GM12878 (cell line): ENCODE measurements at regions of chr10 and their contacts with region 1.

Region 1: DNA sequence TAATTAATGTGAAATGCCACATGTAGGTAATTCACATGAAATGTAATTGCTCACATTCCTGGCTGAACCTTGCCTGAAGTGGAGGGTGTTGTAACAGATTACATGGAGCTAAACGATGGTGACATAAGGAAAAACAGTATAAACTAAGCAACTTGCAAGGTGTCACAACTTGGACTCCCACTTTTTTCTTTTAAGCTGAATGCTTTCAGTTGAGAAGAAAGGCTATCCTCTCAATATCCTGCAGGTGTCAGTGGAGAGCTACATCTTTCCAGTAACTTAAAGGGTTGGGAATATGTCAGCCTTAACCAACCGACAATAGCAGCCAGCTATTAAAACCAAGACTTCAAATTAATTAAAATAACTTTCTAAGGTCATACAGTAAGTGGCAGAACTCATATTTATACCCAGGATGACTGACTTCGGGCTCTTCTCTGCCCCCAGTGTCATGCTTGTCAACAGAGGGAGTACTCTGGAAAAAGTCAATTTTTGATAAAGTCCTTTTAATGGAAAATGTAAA is 33.7 kb downstream of the NRBF2 start:
- DNase-seq: peak; percentile 33
- ATAC-seq: peak; percentile 78
- H3K4me3 ChIP-seq: no peak overlapping the region
- H3K27ac ChIP-seq: no peak overlapping the region
- H3K4me1 ChIP-seq: no peaks in the 10 kb centered on the region
- H3K27me3 ChIP-seq: no peaks in the 10 kb centered on the region
- CTCF ChIP-seq: peak; percentile 63 to 72 (median 66)
- EP300 ChIP-seq: no peak
- POLR2A ChIP-seq: no peak
- RAD21 ChIP-seq: peak; percentile 80

Region 2: DNA sequence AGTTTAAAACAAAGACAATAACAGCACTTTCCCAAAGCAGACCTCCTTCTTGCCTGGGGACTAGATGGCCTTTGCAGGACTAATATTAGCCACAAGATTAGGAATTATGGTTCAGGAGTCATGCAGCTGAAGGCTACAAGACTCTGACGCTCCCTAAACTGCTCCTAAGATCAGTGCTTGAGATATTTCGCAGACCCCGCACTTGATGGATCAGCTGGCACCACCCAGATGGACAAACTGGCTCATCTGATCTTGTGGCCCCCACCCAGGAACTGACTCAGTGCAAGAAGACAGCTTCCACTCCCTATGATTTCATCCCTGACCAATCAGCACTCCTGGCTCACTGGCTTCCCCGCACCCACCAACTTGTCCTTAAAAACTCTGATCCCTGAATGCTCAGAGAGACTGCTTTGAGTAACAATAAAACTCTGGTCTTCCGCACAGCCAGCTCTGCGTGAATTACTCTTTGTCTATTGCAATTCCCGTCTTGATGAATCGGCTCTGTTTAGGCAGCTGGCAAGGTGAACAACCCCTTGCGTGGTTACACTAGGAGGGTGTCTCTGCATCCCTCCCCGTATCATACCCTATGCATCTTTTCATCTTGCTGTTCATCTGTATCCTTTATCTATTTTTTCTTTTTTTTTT is 60.6 kb before region 1 on chr10:
- CTCF ChIA-PET with region 1: no interaction called
- POLR2A ChIA-PET with region 1: no interaction called
- RAD21 ChIA-PET with region 1: no interaction called
- SMC1A ChIA-PET with region 1: interaction called, 10 read pairs
- in situ Hi-C with region 1: no loop called
- intact Hi-C with region 1: no loop called
- DNase-seq: no peak
- ATAC-seq: no peak
- H3K4me3 ChIP-seq: no peak overlapping the region
- H3K27ac ChIP-seq: no peak overlapping the region
- H3K4me1 ChIP-seq: no peaks in the 10 kb centered on the region
- H3K27me3 ChIP-seq: no peaks in the 10 kb centered on the region
- CTCF ChIP-seq: no peak
- EP300 ChIP-seq: no peak
- POLR2A ChIP-seq: no peak
- RAD21 ChIP-seq: no peak

Region 3: DNA sequence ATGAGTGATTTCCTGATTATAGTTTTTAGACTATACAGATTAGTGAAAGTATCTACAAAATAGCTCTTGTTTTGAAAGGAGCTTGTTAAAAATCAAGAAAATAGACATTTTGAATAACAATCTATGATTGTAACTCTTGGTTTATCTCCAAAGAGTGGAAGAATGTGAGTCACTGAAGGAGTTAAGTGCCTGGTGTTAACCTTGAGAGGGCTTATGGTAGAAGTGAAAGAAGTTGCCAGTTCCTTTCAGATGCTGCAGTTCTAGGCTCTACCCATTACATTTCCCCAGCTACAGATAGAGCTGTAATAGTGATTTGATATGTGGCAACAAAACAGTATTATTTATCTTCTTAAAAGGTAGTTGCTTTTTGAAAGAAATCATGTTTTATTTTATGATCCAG is 21.0 kb before region 1 on chr10:
- CTCF ChIA-PET with region 1: interaction called, 13 read pairs
- POLR2A ChIA-PET with region 1: interaction called, 3 read pairs
- RAD21 ChIA-PET with region 1: interaction called, 4 read pairs
- SMC1A ChIA-PET with region 1: interaction called, 9 read pairs
- in situ Hi-C with region 1: no loop called
- intact Hi-C with region 1: no loop called
- DNase-seq: no peak
- ATAC-seq: peak; percentile 80
- H3K4me3 ChIP-seq: no peak overlapping the region
- H3K27ac ChIP-seq: no peak overlapping the region
- H3K4me1 ChIP-seq: no peaks in the 10 kb centered on the region; the same call in 1 of the 2 replicates
- H3K27me3 ChIP-seq: no peaks in the 10 kb centered on the region
- CTCF ChIP-seq: no peak
- EP300 ChIP-seq: no peak
- POLR2A ChIP-seq: no peak
- RAD21 ChIP-seq: no peak

Region 4: DNA sequence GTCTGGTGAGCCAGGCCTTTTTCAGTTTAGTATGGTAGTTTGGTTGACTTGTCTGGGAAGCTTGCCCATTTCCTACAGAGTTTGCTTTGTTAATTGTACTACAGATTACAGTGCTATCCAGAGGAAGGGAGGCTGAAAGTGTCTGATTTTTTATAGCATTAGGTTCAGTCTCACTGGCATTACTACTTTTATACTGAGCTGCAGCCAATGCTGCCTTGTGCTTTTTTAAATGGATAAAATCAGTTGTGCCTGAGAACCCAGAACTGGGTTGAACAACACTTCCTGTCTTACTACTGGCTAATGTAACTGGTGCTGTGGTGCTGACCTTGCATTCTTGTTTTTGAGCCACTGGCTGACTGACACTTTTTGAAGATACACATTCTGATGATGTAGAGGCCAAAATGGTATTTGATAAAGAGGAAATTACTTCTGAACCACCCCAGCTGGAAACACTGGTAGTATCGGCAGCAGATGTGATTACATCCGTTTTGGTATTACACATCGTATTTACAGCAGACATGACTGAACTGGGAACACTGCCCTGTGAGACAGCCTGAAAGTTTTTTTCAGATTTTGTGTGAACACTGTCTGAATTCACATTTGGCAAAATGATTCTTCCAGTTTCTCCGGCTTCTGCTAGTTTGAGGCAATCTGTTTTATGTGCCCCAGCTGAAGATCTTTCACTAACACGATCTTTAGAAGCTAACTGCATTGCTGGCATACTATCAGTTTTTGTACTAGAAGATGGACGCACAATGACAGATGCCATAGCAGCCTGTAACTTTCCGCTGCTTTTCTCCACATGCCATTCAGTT is 40.4 kb after region 1 on chr10:
- CTCF ChIA-PET with region 1: interaction called, 23 read pairs
- POLR2A ChIA-PET with region 1: no interaction called
- RAD21 ChIA-PET with region 1: interaction called, 24 read pairs
- SMC1A ChIA-PET with region 1: interaction called, 23 read pairs
- in situ Hi-C with region 1: no loop called
- intact Hi-C with region 1: no loop called
- DNase-seq: peak; percentile 36
- ATAC-seq: peak; percentile 51
- H3K4me3 ChIP-seq: no peak overlapping the region; the same call in 1 of the 2 replicates
- H3K27ac ChIP-seq: peak overlapping the region; percentile 75
- H3K4me1 ChIP-seq: peaks cover 32% of the 10 kb centered on the region
- H3K27me3 ChIP-seq: no peaks in the 10 kb centered on the region
- CTCF ChIP-seq: no peak
- EP300 ChIP-seq: no peak
- POLR2A ChIP-seq: no peak; the same call in 1 of the 2 replicates
- RAD21 ChIP-seq: no peak

Region 5: GRCh38 chr10:63261496-63261895 is 94.7 kb after region 1 on chr10:
- CTCF ChIA-PET with region 1: interaction called, 14 read pairs
- POLR2A ChIA-PET with region 1: interaction called, 6 read pairs
- RAD21 ChIA-PET with region 1: interaction called, 8 read pairs
- SMC1A ChIA-PET with region 1: interaction called, 8 read pairs
- in situ Hi-C with region 1: no loop called
- intact Hi-C with region 1: no loop called
- DNase-seq: no peak
- ATAC-seq: peak; percentile 46
- H3K4me3 ChIP-seq: peak overlapping the region; percentile 35; the same call in 1 of the 2 replicates
- H3K27ac ChIP-seq: peak overlapping the region; percentile 81
- H3K4me1 ChIP-seq: peaks cover 32% of the 10 kb centered on the region
- H3K27me3 ChIP-seq: no peaks in the 10 kb centered on the region
- CTCF ChIP-seq: no peak
- EP300 ChIP-seq: 0 out of 4 replicates have a peak, but pooled peaks of 1 of the 2 experiments have one; percentile 24
- POLR2A ChIP-seq: no peak
- RAD21 ChIP-seq: no peak

Region 6: GRCh38 chr10:63707254-63707910 is 540.6 kb after region 1 on chr10:
- CTCF ChIA-PET with region 1: interaction called, 7 read pairs
- POLR2A ChIA-PET with region 1: interaction called, 8 read pairs
- RAD21 ChIA-PET with region 1: interaction called, 5 read pairs
- SMC1A ChIA-PET with region 1: interaction called, 16 read pairs
- in situ Hi-C with region 1: no loop called
- intact Hi-C with region 1: no loop called
- DNase-seq: peak; percentile 48
- ATAC-seq: peak; percentile 91
- H3K4me3 ChIP-seq: no peak overlapping the region
- H3K27ac ChIP-seq: no peak overlapping the region
- H3K4me1 ChIP-seq: peaks cover 17% of the 10 kb centered on the region
- H3K27me3 ChIP-seq: no peaks in the 10 kb centered on the region
- CTCF ChIP-seq: no peak
- EP300 ChIP-seq: peak; percentile 76 to 90; a peak in 3 of 4 replicates
- POLR2A ChIP-seq: no peak
- RAD21 ChIP-seq: no peak

Region 7: GRCh38 chr10:63819753-63820329 is 653.0 kb after region 1 on chr10:
- CTCF ChIA-PET with region 1: interaction called, 11 read pairs
- POLR2A ChIA-PET with region 1: no interaction called
- RAD21 ChIA-PET with region 1: interaction called, 3 read pairs
- SMC1A ChIA-PET with region 1: interaction called, 4 read pairs
- in situ Hi-C with region 1: no loop called
- intact Hi-C with region 1: no loop called
- DNase-seq: no peak
- ATAC-seq: peak; percentile 41; the same call in 1 of the 3 replicates
- H3K4me3 ChIP-seq: no peak overlapping the region
- H3K27ac ChIP-seq: no peak overlapping the region
- H3K4me1 ChIP-seq: no peaks in the 10 kb centered on the region
- H3K27me3 ChIP-seq: no peaks in the 10 kb centered on the region; a peak in 1 of 4 replicates
- CTCF ChIP-seq: peak; percentile 58 to 75 (median 69)
- EP300 ChIP-seq: no peak
- POLR2A ChIP-seq: no peak
- RAD21 ChIP-seq: peak; percentile 55